Activated T-helper 2 cell treated with anti-CD3 and anti-CD28 coated beads, Interferon-gamma antibody, Interleukin-2, Interleukin-4, amounts not matched to agents 10 μg/mL and 5 μg/mL and 100 μg/mL, durations not matched to agents 14 hours and 24 hours and 36 hours (primary cell): ENCODE measurements at regions of chr9 and their contacts with region 1.

Region 1: DNA sequence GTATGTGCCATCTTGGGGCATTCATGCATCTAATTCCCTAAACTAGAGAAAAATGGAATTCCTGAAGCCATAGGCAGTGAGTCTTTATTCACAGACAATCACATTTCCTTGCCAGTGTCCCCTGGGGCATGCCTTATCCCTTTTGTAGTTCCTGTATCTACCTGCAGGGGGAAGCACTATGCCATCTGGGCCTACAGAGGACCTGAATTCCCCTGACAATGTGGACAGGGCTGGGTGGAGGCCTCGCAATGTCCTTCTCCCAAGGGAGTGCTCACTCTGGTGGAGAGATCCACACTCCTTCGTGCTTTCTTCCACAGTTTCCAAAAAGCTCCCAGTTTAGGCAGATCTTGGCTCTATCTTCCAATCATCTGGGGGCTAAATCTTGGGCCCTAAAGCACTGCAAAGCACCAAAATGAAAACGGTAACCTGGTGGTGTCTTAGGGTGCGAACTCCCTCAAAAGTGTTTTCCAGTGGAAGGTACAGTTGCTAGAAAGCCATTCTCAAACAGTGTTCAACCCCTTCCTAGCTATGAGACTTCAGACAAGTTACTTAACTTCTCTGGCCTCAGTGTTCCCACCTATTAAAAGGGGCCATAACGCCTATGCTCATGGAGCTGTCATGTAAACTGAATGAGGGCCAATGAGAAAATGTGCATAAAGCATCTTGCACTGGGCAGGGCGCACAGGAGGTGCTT is 17.5 kb downstream of the WHRN start:
- DNase-seq: peak; percentile 40
- H3K4me3 Mint-ChIP-seq: no peak overlapping the region
- H3K27ac Mint-ChIP-seq: peak overlapping the region; percentile 1
- H3K4me1 Mint-ChIP-seq: peaks cover 29% of the 10 kb centered on the region
- H3K27me3 Mint-ChIP-seq: peaks cover 2% of the 10 kb centered on the region

Region 2: GRCh38 chr9:114348906-114349482 is 138.8 kb before region 1 on chr9:
- intact Hi-C with region 1: loop called (anchors 5 kb)
- DNase-seq: peak; percentile 50
- H3K4me3 Mint-ChIP-seq: peak overlapping the region; percentile 5
- H3K27ac Mint-ChIP-seq: peak overlapping the region; percentile 93
- H3K4me1 Mint-ChIP-seq: peaks cover 44% of the 10 kb centered on the region
- H3K27me3 Mint-ChIP-seq: no peaks in the 10 kb centered on the region

Region 3: DNA sequence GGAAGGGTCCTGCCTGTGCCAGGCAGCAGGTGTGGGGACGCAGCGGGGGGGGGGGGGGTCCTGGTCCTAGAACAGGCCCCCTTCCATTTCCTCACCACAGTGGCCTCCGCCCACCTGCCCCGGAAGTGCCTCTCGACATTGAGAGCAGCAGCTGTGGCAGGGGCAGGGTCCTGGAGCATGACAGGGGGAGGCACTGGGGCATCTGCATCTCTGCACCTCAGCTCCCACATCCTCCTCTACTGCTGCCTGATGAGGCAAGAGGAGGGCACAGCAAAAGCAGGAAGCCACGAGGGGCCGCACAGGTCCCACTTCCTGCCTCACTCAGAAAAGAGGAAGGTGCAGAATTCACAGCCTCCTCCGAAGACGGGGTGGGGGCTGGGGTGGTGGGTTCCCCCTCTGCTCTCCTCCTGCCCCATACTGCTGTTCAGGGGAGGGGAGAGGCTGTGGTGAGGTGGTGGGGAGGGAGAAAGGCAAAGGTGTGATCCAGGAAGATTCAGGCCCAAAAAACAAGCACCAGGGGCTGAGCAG is 114.8 kb before region 1 on chr9:
- intact Hi-C with region 1: no loop called
- DNase-seq: peak; percentile 83
- H3K4me3 Mint-ChIP-seq: peak overlapping the region; percentile 76
- H3K27ac Mint-ChIP-seq: peak overlapping the region; percentile 85
- H3K4me1 Mint-ChIP-seq: peaks cover 77% of the 10 kb centered on the region
- H3K27me3 Mint-ChIP-seq: no peaks in the 10 kb centered on the region

Region 4: GRCh38 chr9:114405294-114406034 is 82.3 kb before region 1 on chr9:
- intact Hi-C with region 1: loop called (anchors 5 kb)
- DNase-seq: peak; percentile 71
- H3K4me3 Mint-ChIP-seq: no peak overlapping the region
- H3K27ac Mint-ChIP-seq: no peak overlapping the region
- H3K4me1 Mint-ChIP-seq: peaks cover 6% of the 10 kb centered on the region
- H3K27me3 Mint-ChIP-seq: no peaks in the 10 kb centered on the region

Region 5: DNA sequence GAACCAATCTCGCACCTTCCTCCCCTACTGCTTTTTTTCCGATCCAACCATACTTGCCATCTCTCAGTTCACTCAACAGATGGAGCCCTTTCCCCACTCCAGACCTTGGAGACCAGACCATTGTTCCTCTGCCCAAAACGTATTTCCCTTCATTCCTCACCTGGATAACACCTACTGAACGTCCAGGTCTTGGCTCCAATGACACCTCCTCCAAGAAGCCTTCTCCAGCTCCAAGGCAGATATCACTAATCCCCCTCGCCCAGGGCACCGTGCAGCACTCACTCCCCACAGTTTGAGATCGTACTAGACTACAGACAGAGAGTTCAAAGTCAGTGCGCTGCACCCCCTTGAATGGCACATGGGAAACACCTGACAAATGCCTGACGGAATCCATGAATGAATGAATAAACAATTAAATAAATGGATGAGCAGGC is 52.9 kb before region 1 on chr9:
- intact Hi-C with region 1: no loop called
- DNase-seq: no peak
- H3K4me3 Mint-ChIP-seq: no peak overlapping the region
- H3K27ac Mint-ChIP-seq: no peak overlapping the region
- H3K4me1 Mint-ChIP-seq: peaks cover 3% of the 10 kb centered on the region
- H3K27me3 Mint-ChIP-seq: peaks cover 6% of the 10 kb centered on the region

Region 6: DNA sequence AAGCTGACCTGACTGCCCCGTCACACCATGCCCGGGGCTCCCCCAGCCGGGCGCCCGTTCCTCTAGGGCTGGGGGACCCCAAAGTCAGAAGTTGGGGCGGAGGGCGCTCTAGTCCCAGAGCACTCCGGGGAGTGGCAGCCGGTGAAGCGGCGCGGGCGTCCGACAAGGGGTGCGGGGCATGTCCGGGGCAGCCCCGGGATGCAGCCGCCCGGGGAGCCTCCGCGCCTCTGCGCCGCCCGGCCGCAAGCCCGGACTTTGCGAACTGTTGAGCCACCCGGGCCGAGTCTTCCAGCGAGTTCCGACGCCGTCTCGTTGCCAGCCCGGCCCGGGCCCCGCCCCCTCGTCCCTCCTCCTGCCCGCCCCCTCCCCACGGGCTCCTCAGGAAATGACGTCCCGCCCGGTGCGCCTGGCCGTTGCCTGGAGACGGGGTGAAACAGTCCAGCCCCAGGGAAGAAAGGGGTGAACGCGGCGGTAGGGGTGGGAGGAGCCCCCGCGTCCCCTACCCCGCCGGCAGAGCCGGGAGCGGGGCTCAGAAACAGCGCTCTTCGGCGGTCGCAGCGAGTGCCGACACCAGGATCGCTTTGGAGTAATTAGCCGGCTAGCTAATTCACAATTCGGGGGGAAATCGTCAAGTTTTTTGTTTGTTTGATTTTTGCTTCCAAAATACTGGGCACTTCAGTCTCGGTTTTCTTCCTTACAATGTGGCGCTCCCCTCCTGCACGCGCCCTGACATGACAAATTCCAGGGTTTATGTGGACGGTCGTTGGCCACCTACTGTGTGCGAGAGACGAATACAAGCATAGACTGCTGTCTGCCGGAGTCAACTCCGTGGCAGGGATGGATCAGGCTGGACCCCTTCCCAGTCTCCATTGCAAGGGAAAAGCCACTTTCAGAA is 17.7 kb after region 1 on chr9 and contains the start of gene WHRN:
- intact Hi-C with region 1: loop called (anchors 1 kb)
- DNase-seq: peak; percentile 85
- H3K4me3 Mint-ChIP-seq: peak within 1 kb of the TSS; percentile 78
- H3K27ac Mint-ChIP-seq: peak within 1 kb of the TSS; percentile 38
- H3K4me1 Mint-ChIP-seq: peaks cover 14% of the 10 kb centered on the region
- H3K27me3 Mint-ChIP-seq: peaks cover 64% of the 10 kb centered on the region
- total RNA-seq, gene WHRN: 2.8 and 2.9 TPM in 2 replicates

Region 7: DNA sequence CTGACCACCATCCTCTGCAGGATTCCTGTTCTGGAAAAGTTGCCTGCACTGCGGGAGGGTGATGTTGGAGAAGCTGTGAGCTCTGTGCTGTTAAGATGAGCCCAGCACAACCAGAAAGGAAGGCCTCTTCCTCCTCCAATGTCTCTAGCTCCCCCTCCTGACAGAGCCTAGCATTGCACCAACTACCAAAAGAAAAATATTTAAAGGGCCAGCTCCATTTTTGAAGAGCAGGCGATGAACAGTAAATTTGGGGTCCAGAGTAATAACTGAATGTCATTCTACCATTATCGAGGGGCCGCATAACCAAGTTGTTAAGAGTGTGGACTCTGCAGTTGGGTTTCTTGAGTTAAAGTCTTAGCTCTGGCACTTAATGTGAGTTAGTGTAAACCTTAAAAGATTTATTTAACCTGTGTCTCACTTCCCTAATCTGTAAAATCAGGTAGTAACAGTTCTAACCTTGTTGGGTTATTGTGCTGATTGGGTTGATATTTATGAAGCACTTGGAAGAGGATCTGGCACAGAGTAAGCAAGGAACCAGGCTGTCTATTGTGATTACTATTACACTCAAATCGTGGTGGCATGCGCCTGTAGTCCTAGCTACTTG is 165.9 kb after region 1 on chr9:
- intact Hi-C with region 1: loop called (anchors 1 kb)
- DNase-seq: peak; percentile 73
- H3K4me3 Mint-ChIP-seq: no peak overlapping the region
- H3K27ac Mint-ChIP-seq: no peak overlapping the region
- H3K4me1 Mint-ChIP-seq: peaks cover 21% of the 10 kb centered on the region
- H3K27me3 Mint-ChIP-seq: no peaks in the 10 kb centered on the region

Region 8: GRCh38 chr9:114718801-114719221 is 231.1 kb after region 1 on chr9:
- intact Hi-C with region 1: loop called (anchors 1 kb)
- DNase-seq: peak; percentile 93
- H3K4me3 Mint-ChIP-seq: peak overlapping the region; percentile 38
- H3K27ac Mint-ChIP-seq: peak overlapping the region; percentile 94
- H3K4me1 Mint-ChIP-seq: peaks cover 74% of the 10 kb centered on the region
- H3K27me3 Mint-ChIP-seq: no peaks in the 10 kb centered on the region

Region 9: DNA sequence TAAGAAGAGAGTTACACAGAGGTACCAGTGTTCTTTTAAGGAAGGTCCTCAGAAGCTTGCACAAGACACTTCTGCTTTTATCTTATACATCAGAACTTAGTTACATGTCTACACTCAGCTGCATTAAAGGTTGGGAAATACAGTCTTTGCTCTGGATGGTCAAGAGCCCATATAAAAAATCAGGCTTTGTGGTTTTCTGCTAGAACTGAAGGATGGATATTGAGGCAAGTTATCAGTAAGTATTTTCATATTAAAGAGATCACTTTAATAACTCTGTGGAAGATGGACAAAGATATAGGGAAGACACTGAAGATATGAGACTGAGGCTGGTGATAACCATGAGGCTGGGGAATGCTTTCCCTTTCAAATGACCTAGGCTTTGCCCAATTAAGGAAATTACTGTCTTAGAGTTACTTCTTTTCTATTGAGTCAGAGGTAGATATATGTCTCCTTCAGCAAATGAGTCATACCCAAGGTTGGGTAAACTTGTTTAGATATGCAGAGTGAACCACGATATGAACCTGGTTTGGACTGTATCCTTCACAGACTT is 717.2 kb after region 1 on chr9:
- intact Hi-C with region 1: loop called (anchors 5 kb)
- DNase-seq: no peak
- H3K4me3 Mint-ChIP-seq: no peak overlapping the region
- H3K27ac Mint-ChIP-seq: no peak overlapping the region
- H3K4me1 Mint-ChIP-seq: peaks cover 40% of the 10 kb centered on the region
- H3K27me3 Mint-ChIP-seq: peaks cover 17% of the 10 kb centered on the region